ENCODE measurements at regions of chr2 and their contacts with region 1.

Region 1: DNA sequence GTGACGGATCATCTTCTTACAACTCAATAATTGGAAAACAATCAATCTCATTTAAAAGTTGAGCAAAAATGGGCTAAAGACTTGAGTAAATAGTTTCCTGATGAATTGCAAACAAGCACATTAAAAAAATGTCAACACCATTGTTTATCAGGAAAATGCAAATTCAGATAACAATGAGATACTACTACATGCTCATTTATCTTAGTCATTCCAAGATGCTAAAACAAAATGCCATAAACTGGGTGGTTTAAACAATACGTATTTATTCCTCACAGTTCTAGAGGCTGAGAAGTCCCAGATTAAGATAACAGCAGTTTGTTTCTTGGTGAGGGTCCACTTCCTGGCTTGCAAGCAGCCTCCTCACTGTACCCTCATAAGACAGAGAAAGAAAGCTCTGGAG is 359.6 kb downstream of the NR4A2 start:
- DNase-seq: no peak
- H3K4me3 ChIP-seq: no peak overlapping the region
- H3K27ac ChIP-seq: no peak overlapping the region
- H3K4me1 ChIP-seq: no peaks in the 10 kb centered on the region
- H3K27me3 ChIP-seq: no peaks in the 10 kb centered on the region
- CTCF ChIP-seq: no peak

Region 2: GRCh38 chr2:155866477-155866876 is 106.4 kb before region 1 on chr2:
- CTCF ChIA-PET with region 1: no interaction called
- POLR2A ChIA-PET with region 1: no interaction called
- intact Hi-C with region 1: no loop called
- DNase-seq: no peak
- H3K4me3 ChIP-seq: no peak overlapping the region
- H3K27ac ChIP-seq: no peak overlapping the region
- H3K4me1 ChIP-seq: no peaks in the 10 kb centered on the region
- H3K27me3 ChIP-seq: no peaks in the 10 kb centered on the region
- CTCF ChIP-seq: no peak

Region 3: GRCh38 chr2:156057647-156058046 is 84.7 kb after region 1 on chr2:
- CTCF ChIA-PET with region 1: no interaction called
- POLR2A ChIA-PET with region 1: no interaction called
- intact Hi-C with region 1: no loop called
- DNase-seq: no peak
- H3K4me3 ChIP-seq: no peak overlapping the region
- H3K27ac ChIP-seq: no peak overlapping the region
- H3K4me1 ChIP-seq: no peaks in the 10 kb centered on the region
- H3K27me3 ChIP-seq: no peaks in the 10 kb centered on the region
- CTCF ChIP-seq: no peak

Region 4: GRCh38 chr2:156309167-156309566 is 336.3 kb after region 1 on chr2:
- CTCF ChIA-PET with region 1: no interaction called
- POLR2A ChIA-PET with region 1: interaction called, 16 read pairs
- intact Hi-C with region 1: no loop called
- DNase-seq: no peak
- H3K4me3 ChIP-seq: no peak overlapping the region
- H3K27ac ChIP-seq: no peak overlapping the region
- H3K4me1 ChIP-seq: no peaks in the 10 kb centered on the region
- H3K27me3 ChIP-seq: no peaks in the 10 kb centered on the region
- CTCF ChIP-seq: no peak

Measured in PC-9 (cell line).